Pancreas (tissue), 10 donors: ENCODE measurements at regions of chr11 and their contacts with region 1.

Region 1: GRCh38 chr11:63641727-63642126 is 27.5 kb upstream of the PLAAT3 start:
- DNase-seq: no peak
- ATAC-seq: peak in 3 of 4 donors; percentile 33 to 54 (median 40)
- H3K4me3 ChIP-seq: no peak overlapping the region
- H3K27ac ChIP-seq: no peak overlapping the region
- H3K4me1 ChIP-seq: peaks cover 0 to 14% (median 7%) of the 10 kb centered on the region in 3 donors
- H3K27me3 ChIP-seq: no peaks in the 10 kb centered on the region
- CTCF ChIP-seq: no peak

Region 2: DNA sequence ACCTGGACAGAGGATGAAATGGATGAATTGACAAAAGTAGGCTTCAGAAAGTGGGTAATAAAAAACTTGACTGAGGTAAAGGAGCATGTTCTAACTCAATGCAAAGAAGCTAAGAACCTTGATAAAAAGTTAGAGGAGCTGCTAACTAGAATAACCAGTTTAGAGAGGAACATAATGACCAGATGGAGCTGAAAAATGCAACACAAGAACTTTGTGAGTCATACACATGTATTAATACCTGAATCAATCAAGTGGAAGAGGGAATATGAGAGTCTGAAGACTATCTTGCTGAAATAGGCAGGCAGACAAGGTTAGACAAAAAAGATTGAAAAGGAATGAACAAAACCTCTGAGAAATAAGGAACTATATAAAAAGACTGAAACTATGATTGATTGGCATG is 320.0 kb before region 1 on chr11:
- intact Hi-C with region 1: no loop called
- DNase-seq: no peak
- ATAC-seq: no peak
- H3K4me3 ChIP-seq: no peak overlapping the region
- H3K27ac ChIP-seq: no peak overlapping the region
- H3K4me1 ChIP-seq: no peaks in the 10 kb centered on the region
- H3K27me3 ChIP-seq: no peaks in the 10 kb centered on the region
- CTCF ChIP-seq: no peak

Region 3: DNA sequence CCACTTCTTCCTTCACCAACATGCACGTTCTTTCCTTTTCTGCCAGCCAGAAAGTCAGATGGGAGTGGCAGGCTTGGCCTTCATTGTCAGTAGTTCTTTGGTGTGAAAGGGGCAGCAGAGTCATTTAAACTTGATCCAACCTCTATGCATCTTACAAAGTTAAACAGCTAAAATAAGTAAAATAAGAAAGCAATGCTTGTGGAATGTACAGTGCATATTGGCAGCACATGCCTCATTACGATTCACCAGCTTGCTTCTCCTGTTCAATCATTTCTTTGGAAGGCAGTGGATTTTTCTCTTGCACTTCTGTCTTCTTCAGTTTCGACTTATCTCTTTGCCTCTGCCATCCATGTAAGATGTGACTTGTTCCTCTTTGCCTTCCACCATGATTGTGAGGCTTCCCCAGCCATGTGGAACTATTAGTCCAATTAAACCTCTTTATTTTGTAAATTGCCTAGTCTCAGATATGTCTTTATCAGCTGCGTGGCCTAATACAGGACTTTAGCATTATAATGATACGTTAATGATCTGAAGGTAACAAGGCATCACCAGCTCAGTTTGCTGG is 121.0 kb before region 1 on chr11:
- intact Hi-C with region 1: no loop called
- DNase-seq: no peak
- ATAC-seq: no peak
- H3K4me3 ChIP-seq: no peak overlapping the region
- H3K27ac ChIP-seq: no peak overlapping the region
- H3K4me1 ChIP-seq: no peaks in the 10 kb centered on the region
- H3K27me3 ChIP-seq: no peaks in the 10 kb centered on the region
- CTCF ChIP-seq: no peak

Region 4: DNA sequence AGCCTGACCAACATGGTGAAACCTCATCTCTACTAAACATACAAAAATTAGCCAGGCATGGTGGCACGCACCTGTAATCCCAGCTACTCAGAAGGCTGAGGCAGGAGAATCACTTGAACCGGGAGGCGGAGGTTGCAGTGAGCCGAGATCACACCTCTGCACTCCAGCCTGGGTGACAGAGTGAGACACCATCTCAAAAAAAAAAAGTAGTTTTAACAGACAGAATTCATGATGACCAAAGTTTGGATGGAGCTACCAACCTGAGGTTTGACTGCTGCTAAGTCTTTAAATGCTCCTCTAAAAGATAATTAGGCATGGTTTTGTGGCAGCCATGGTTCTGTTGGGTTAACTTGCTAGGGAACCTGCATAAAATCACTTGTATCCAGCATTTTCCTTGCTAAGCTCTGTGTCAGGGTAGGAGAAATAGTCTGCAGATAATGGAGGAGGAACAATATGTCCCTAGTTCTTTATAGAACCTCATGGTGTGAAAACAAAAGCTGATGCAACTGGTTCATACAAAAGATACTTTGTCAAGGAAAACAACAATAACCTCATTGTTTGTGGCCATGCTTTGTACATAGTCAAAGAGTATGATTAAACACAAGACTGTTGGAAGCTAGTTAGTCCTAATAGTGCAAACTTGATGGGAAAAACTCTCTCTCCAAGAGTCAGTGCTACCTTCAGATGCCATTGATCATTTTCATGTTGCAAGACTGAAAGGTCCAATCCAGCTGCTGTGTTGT is 58.6 kb before region 1 on chr11:
- intact Hi-C with region 1: loop called in 1 of 3 experiments (anchors 10 kb)
- DNase-seq: no peak
- ATAC-seq: peak in 3 of 4 donors; percentile 34 to 78 (median 76)
- H3K4me3 ChIP-seq: no peak overlapping the region
- H3K27ac ChIP-seq: peak overlapping the region in 2 of 4 donors; percentile 5 to 42
- H3K4me1 ChIP-seq: peaks cover 0 to 11% (median 6%) of the 10 kb centered on the region in 3 donors
- H3K27me3 ChIP-seq: no peaks in the 10 kb centered on the region
- CTCF ChIP-seq: no peak